Activated naive CD4-positive, alpha-beta T cell treated with anti-CD3 and anti-CD28 coated beads for 36 hours (primary cell): ENCODE measurements at regions of chr2 and their contacts with region 1.

Region 1: GRCh38 chr2:66429071-66429477 is 5.9 kb upstream of the MEIS1 start:
- DNase-seq: no peak
- H3K4me3 Mint-ChIP-seq: no peak overlapping the region
- H3K27ac Mint-ChIP-seq: no peak overlapping the region
- H3K4me1 Mint-ChIP-seq: peaks cover 12% of the 10 kb centered on the region
- H3K27me3 Mint-ChIP-seq: peaks cover 70% of the 10 kb centered on the region

Region 2: GRCh38 chr2:66240286-66240685 is 188.8 kb before region 1 on chr2:
- CTCF ChIA-PET with region 1: no interaction called
- intact Hi-C with region 1: no loop called
- DNase-seq: no peak
- H3K4me3 Mint-ChIP-seq: no peak overlapping the region
- H3K27ac Mint-ChIP-seq: no peak overlapping the region
- H3K4me1 Mint-ChIP-seq: no peaks in the 10 kb centered on the region
- H3K27me3 Mint-ChIP-seq: no peaks in the 10 kb centered on the region

Region 3: GRCh38 chr2:67476809-67477790 is 1048.0 kb after region 1 on chr2:
- CTCF ChIA-PET with region 1: no interaction called
- intact Hi-C with region 1: loop called (anchors 5 kb)
- DNase-seq: no peak
- H3K4me3 Mint-ChIP-seq: no peak overlapping the region
- H3K27ac Mint-ChIP-seq: no peak overlapping the region
- H3K4me1 Mint-ChIP-seq: no peaks in the 10 kb centered on the region
- H3K27me3 Mint-ChIP-seq: peaks cover 34% of the 10 kb centered on the region

Region 4: GRCh38 chr2:67846370-67847070 is 1417.4 kb after region 1 on chr2:
- CTCF ChIA-PET with region 1: interaction called, 3 read pairs
- intact Hi-C with region 1: loop called (anchors 1 kb)
- DNase-seq: peak; percentile 55
- H3K4me3 Mint-ChIP-seq: no peak overlapping the region
- H3K27ac Mint-ChIP-seq: no peak overlapping the region
- H3K4me1 Mint-ChIP-seq: no peaks in the 10 kb centered on the region
- H3K27me3 Mint-ChIP-seq: peaks cover 21% of the 10 kb centered on the region